ENCODE measurements at regions of chr17 and their contacts with region 1.

Region 1: DNA sequence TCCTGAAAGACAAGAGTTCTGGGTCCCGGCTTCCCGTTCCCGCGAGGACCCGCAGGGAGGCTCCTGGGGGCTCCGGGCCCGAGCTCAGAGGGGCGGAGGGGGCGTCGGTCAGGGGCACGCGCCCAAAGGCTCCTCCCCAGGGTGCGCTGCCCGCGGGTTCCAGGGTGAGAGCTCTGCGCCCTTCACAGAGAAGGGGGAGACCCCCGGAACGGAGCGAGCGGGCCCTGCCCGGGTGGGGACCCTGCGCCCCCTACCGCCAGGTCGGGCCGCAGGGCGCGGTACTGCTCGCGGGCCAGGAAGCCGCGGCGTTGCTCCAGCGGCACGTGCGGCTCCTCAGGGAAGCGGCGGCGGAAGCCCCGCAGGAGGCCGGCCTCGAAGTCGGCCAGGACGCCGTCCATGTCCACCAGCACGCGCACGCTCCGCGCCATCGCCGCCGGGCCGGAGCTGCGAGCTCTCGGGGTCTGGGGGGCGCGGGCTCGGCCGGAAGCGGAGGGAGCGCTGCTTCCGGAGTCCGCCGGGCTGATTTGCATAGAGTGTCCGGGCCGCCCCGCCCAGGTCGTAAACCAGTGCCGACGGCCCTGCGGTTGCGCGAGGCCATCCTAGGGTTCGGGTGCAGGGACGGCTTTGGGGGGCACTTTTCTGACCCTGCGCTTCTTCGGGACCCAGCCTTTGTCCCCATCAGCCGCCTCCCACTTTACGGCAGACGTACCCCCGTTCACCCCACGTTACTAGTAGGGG is at the start of gene NT5C:
- DNase-seq: peak; percentile 91

Region 2: GRCh38 chr17:75059369-75060345 is 71.8 kb before region 1 on chr17:
- CTCF ChIA-PET with region 1: no interaction called
- POLR2A ChIA-PET with region 1: interaction called, 10 read pairs
- DNase-seq: no peak

Region 3: DNA sequence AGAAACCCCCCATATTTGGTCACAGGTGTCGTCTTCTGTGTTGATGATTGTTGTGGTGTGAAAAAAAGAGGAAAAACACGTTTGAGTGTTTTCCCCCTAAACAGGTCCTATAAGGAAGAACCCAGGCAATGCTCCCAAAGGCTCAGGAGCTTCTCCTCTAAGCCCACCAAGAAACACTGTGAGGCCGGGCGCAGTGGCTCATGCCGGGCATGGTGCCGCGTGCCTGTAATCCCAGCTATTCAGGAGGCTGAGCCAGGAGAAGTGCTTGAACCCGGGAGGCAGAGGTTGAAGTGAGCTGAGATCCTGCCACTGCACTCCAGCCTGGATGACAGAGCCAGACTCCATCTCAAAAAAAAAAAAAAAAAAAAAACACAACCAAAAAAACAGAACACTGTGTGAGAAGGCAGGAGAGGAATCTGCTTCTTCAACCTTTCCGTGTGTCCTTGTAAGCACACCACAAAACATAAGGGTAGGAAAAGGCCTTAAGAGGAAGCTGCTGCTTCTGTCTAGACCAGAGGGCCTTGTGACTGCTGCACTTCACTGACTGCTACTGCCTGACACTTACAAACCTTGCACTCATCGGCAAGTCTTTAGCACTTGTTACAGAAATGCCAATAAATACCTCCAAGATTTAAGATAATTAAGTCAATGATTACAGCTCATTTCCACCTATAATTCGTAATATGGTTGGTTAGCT is 13.5 kb after region 1 on chr17:
- CTCF ChIA-PET with region 1: interaction called, 3 read pairs
- POLR2A ChIA-PET with region 1: interaction called, 20 read pairs
- DNase-seq: no peak

Region 4: DNA sequence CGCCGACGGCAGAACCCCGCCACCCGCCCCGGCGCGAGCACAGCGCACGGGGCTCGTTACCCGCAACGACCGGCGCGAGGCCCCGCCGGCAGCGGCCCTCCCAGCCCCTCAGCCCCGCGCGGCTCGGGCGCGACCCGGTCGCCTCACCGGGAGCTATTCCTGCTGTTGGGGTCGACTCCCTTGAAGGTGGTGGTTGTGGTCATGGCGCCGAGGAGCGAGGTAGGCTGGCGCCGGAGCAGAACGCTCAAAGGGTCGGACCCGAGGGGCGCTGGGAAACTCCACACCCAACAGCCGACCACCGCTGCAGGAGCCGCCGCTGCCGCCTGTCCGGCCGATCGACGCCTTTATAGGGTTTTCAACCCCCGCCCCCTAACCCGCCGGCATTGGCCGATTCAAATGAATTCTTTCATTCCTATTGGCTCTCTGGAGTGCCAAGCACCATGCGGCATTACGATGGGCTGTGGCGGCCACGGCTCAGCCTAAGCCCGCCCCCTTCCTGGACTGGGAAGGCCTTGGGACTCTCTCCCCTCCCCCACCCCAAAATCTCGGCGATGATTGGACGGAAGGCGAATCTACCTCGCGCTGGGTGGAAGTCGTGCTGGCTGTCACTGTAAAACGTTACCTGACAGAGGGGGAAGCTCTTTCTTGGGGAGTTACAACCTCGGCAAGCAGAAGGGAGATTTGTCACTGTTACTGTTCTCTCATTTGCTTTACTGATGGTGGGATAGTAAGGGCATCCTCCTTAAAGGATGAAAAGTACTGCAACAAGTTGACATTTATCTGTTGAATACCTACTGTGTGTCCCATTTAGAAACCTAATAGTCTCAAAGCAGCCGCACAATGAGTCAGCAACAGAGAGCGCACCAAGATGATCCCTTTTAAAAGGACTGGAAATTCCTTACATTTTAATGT is 23.0 kb after region 1 on chr17 and contains the start of gene JPT1:
- CTCF ChIA-PET with region 1: interaction called, 3 read pairs
- POLR2A ChIA-PET with region 1: interaction called, 20 read pairs
- DNase-seq: peak; percentile 99

Region 5: GRCh38 chr17:75182569-75183450 is 51.4 kb after region 1 on chr17 and contains the start of gene SUMO2:
- CTCF ChIA-PET with region 1: interaction called, 3 read pairs
- POLR2A ChIA-PET with region 1: interaction called, 11 read pairs
- DNase-seq: peak; percentile 99